ENCODE measurements at regions of chr3 and their contacts with region 1.

Region 1: DNA sequence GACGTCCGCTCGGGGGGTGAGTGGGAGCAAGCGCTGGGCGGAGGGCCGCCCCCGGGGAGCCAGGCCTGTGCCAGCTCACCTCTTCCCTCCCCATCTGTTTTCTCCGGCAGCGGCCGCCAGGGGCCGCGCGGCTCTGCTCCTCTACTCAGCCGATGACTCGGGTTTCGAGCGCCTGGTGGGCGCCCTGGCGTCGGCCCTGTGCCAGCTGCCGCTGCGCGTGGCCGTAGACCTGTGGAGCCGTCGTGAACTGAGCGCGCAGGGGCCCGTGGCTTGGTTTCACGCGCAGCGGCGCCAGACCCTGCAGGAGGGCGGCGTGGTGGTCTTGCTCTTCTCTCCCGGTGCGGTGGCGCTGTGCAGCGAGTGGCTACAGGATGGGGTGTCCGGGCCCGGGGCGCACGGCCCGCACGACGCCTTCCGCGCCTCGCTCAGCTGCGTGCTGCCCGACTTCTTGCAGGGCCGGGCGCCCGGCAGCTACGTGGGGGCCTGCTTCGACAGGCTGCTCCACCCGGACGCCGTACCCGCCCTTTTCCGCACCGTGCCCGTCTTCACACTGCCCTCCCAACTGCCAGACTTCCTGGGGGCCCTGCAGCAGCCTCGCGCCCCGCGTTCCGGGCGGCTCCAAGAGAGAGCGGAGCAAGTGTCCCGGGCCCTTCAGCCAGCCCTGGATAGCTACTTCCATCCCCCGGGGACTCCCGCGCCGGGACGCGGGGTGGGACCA is 632 bp upstream of the CRELD1 start:
- DNase-seq: peak; percentile 82 to 93
- ATAC-seq: peak; percentile 68 to 80 (median 70)
- H3K4me3 ChIP-seq: peak overlapping the region; percentile 78
- H3K4me3 Mint-ChIP-seq: peak overlapping the region; percentile 98
- H3K27ac ChIP-seq: peak overlapping the region; percentile 93
- H3K27ac Mint-ChIP-seq: peak overlapping the region; percentile 97 to 99
- H3K4me1 ChIP-seq: peaks cover 29% of the 10 kb centered on the region
- H3K4me1 Mint-ChIP-seq: peaks cover 44 to 50% of the 10 kb centered on the region in 2 donors
- H3K27me3 ChIP-seq: no peaks in the 10 kb centered on the region
- H3K27me3 Mint-ChIP-seq: no peaks in the 10 kb centered on the region
- CTCF ChIP-seq: peak; percentile 82

Region 2: DNA sequence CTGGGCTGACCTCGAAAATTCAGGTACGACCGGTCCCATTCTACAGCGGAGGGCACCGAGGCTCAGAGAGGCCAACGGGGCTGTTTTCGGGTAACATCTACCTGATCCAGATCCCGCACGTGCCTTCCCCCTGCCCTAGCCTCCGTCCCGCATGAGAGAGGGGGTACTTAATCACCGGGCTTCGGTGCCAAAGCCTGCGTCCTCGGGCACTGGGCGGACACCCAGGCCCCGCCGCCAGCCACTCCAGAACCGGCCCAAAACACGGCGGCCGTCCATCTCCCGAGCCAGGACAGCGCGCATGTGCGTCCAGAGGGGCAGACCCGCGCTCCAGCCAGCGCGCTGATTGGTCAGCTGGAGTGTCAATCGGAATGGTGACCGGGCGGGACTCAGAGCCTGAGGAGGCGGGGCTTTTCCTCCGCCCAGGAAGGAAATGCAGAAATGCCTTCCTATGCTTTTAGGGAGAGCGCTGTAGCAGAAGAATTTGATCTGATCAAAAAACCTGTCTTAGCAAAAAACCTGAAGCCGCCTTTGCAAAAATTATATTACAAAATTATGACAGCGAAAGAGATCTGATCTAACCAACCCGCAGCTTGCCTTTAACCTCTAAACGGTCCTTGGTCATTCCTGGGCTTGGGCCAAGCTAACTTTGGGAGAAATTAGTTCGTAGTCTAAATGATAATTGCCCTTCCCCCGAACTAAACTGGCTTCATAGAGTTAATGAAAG is 89.1 kb before region 1 on chr3 and contains the start of gene RPUSD3:
- intact Hi-C with region 1: loop called (anchors 5 kb)
- DNase-seq: peak; percentile 98 to 99
- ATAC-seq: peak; percentile 99 to 100 (median 99)
- H3K4me3 ChIP-seq: peak within 1 kb of the TSS; percentile 99
- H3K4me3 Mint-ChIP-seq: peak within 1 kb of the TSS; percentile 99
- H3K27ac ChIP-seq: peak within 1 kb of the TSS; percentile 68
- H3K27ac Mint-ChIP-seq: peak within 1 kb of the TSS; percentile 96
- H3K4me1 ChIP-seq: peaks cover 18% of the 10 kb centered on the region
- H3K4me1 Mint-ChIP-seq: peaks cover 22 to 24% of the 10 kb centered on the region in 2 donors
- H3K27me3 ChIP-seq: no peaks in the 10 kb centered on the region
- H3K27me3 Mint-ChIP-seq: no peaks in the 10 kb centered on the region
- CTCF ChIP-seq: no peak
- total RNA-seq, gene RPUSD3: 27.5 to 43.9 (median 30.9) TPM

Region 3: GRCh38 chr3:9890249-9891071 is 42.5 kb before region 1 on chr3 and contains the start of gene JAGN1:
- intact Hi-C with region 1: loop called (anchors 2 kb)
- DNase-seq: peak; percentile 90 to 95
- ATAC-seq: peak; percentile 90 to 94 (median 93)
- H3K4me3 ChIP-seq: peak within 1 kb of the TSS; percentile 100
- H3K4me3 Mint-ChIP-seq: peak within 1 kb of the TSS; percentile 99
- H3K27ac ChIP-seq: peak within 1 kb of the TSS; percentile 100
- H3K27ac Mint-ChIP-seq: peak within 1 kb of the TSS; percentile 98 to 100
- H3K4me1 ChIP-seq: peaks cover 17% of the 10 kb centered on the region
- H3K4me1 Mint-ChIP-seq: peaks cover 37 to 50% of the 10 kb centered on the region in 2 donors
- H3K27me3 ChIP-seq: no peaks in the 10 kb centered on the region
- H3K27me3 Mint-ChIP-seq: no peaks in the 10 kb centered on the region
- CTCF ChIP-seq: no peak
- total RNA-seq, gene JAGN1: 15.4 to 16.6 (median 15.5) TPM

Region 4: DNA sequence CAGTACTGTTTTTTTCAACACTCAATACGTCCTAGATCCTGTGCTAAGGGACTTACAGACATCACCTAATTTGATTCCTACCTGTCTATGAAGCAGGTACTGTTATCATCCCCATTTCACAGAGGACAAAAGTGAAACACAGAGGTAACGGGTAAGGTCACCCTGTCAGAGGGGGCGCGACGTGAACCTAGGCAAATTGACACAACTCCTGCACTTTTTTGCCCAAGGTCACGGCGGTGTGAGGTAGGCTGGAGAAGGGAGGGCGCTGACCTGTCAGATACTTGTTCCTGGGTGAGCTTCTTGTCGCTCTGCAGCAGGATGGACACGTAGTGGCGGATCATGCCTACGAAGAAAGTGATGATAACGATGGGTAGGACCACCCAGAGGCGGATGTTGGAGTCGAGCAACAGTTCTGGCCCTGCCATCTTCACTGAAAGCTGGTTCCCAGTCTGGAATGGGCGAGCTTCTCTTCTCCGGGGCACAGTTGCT is 53.3 kb after region 1 on chr3:
- intact Hi-C with region 1: loop called (anchors 2 kb)
- DNase-seq: no peak
- ATAC-seq: peak; percentile 58 to 66 (median 63)
- H3K4me3 ChIP-seq: peak overlapping the region; percentile 96
- H3K4me3 Mint-ChIP-seq: peak overlapping the region; percentile 99
- H3K27ac ChIP-seq: peak overlapping the region; percentile 86
- H3K27ac Mint-ChIP-seq: peak overlapping the region; percentile 97 to 98
- H3K4me1 ChIP-seq: peaks cover 18% of the 10 kb centered on the region
- H3K4me1 Mint-ChIP-seq: peaks cover 18 to 19% of the 10 kb centered on the region in 2 donors
- H3K27me3 ChIP-seq: no peaks in the 10 kb centered on the region
- H3K27me3 Mint-ChIP-seq: no peaks in the 10 kb centered on the region
- CTCF ChIP-seq: no peak

Region 5: GRCh38 chr3:10026084-10026890 is 93.3 kb after region 1 on chr3 and contains the start of gene FANCD2:
- intact Hi-C with region 1: loop called (anchors 5 kb)
- DNase-seq: peak; percentile 95 to 97
- ATAC-seq: peak; percentile 95 to 96 (median 95)
- H3K4me3 ChIP-seq: peak within 1 kb of the TSS; percentile 76
- H3K4me3 Mint-ChIP-seq: peak within 1 kb of the TSS; percentile 98
- H3K27ac ChIP-seq: peak within 1 kb of the TSS; percentile 73
- H3K27ac Mint-ChIP-seq: peak within 1 kb of the TSS; percentile 93 to 94
- H3K4me1 ChIP-seq: peaks cover 21% of the 10 kb centered on the region
- H3K4me1 Mint-ChIP-seq: peaks cover 0 to 20% of the 10 kb centered on the region in 2 donors
- H3K27me3 ChIP-seq: no peaks in the 10 kb centered on the region
- H3K27me3 Mint-ChIP-seq: no peaks in the 10 kb centered on the region
- CTCF ChIP-seq: no peak
- total RNA-seq, gene FANCD2: 9.0 to 15.7 (median 14.6) TPM

Region 6: GRCh38 chr3:10041034-10041433 is 108.0 kb after region 1 on chr3:
- intact Hi-C with region 1: no loop called
- DNase-seq: no peak
- ATAC-seq: no peak
- H3K4me3 ChIP-seq: no peak overlapping the region
- H3K4me3 Mint-ChIP-seq: no peak overlapping the region
- H3K27ac ChIP-seq: no peak overlapping the region
- H3K27ac Mint-ChIP-seq: no peak overlapping the region
- H3K4me1 ChIP-seq: no peaks in the 10 kb centered on the region
- H3K4me1 Mint-ChIP-seq: no peaks in the 10 kb centered on the region
- H3K27me3 ChIP-seq: no peaks in the 10 kb centered on the region
- H3K27me3 Mint-ChIP-seq: no peaks in the 10 kb centered on the region
- CTCF ChIP-seq: no peak

Region 7: DNA sequence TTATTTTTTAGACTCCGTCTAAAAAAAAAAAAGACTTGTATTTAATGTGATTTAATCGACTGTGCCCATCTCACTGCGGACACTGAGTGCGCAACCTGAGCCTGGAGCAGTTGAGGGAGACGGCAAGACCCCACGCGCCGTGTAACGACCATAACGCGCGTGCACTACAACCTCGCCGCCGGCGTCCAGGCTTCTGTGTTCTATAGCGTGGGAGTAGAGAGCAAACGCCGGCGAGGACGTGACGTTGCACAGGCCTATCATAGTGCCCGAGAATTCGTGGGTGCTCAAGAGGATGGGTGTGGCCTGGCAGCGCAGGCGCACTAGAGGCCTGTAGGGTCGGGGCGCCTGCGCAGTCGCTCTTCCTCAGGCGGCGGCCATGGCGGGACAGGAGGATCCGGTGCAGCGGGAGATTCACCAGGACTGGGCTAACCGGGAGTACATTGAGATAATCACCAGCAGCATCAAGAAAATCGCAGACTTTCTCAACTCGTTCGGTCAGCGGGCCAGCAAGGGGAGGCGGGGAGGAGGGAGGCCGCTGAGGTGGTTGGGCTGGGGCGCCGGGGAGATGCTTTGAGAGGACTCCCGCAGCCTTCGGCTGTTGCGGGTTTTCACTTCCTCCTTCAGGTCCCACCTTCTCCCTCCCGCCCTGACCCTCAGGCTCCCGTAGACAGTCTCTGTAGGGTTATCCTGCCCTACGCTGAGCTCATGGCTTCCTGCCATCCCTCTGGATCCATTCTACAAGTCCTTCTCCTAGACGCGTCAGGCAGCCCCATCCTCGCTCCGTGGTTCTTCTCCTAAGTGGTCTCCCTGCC is 182.5 kb after region 1 on chr3 and contains the start of gene BRK1:
- intact Hi-C with region 1: loop called (anchors 5 kb)
- DNase-seq: peak; percentile 83 to 98
- ATAC-seq: peak; percentile 97 to 100 (median 98)
- H3K4me3 ChIP-seq: peak within 1 kb of the TSS; percentile 92
- H3K4me3 Mint-ChIP-seq: peak within 1 kb of the TSS; percentile 99
- H3K27ac ChIP-seq: peak within 1 kb of the TSS; percentile 78
- H3K27ac Mint-ChIP-seq: peak within 1 kb of the TSS; percentile 97 to 98
- H3K4me1 ChIP-seq: peaks cover 25% of the 10 kb centered on the region
- H3K4me1 Mint-ChIP-seq: peaks cover 20 to 24% of the 10 kb centered on the region in 2 donors
- H3K27me3 ChIP-seq: no peaks in the 10 kb centered on the region
- H3K27me3 Mint-ChIP-seq: no peaks in the 10 kb centered on the region
- CTCF ChIP-seq: no peak
- total RNA-seq, gene BRK1: 65.8 to 78.5 (median 75.0) TPM

Region 8: DNA sequence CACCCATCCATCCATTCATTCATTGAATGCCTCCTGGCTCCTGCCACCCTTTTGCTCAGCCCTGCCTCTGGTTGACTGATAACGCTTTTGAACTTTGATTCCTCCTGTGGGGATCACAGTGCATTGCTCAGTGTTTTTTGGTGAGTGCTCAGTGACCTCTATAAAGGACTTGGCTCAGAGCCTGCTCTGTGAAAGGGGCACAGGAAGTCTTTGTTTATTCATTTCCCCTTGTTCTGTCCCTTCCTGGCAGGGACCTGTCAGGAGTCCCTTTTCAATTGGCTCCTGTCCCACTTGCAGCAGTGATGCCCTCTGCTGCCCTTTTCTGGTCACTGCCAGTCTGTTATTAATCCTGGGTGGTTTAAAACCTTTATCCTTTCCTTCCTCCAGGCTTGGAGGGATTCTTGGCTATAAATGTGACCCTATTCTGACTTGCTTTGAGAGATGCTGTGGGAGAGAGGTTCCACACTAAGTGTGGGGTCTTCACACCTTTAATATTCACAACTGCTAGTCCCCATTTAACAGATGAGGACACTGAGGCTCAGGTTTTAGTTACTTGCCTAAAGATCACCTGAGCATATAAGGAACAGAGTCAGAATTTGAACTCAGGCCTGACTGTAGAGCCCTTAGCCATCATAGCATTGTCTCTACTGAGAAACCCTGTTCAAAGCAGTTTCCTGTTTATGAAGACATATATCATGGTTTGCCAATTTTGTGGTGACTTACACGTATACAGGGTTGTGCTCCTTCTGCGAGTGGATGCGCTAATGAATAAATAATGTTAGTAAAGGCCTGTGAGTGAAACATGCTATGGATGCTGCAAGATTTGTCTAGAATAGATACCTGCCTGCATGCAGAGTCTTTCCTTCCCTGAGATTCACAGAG is 292.0 kb after region 1 on chr3:
- intact Hi-C with region 1: loop called (anchors 2 kb)
- DNase-seq: peak; percentile 50 to 83
- ATAC-seq: peak; percentile 74 to 78 (median 77)
- H3K4me3 ChIP-seq: no peak overlapping the region
- H3K4me3 Mint-ChIP-seq: peak overlapping the region; percentile 74
- H3K27ac ChIP-seq: no peak overlapping the region
- H3K27ac Mint-ChIP-seq: peak overlapping the region; percentile 74 to 92
- H3K4me1 ChIP-seq: peaks cover 61% of the 10 kb centered on the region
- H3K4me1 Mint-ChIP-seq: peaks cover 46 to 53% of the 10 kb centered on the region in 2 donors
- H3K27me3 ChIP-seq: no peaks in the 10 kb centered on the region
- H3K27me3 Mint-ChIP-seq: no peaks in the 10 kb centered on the region
- CTCF ChIP-seq: peak; percentile 76